CD4-positive, alpha-beta memory T cell (primary cell): ENCODE measurements at regions of chr10 and their contacts with region 1.

Region 1: GRCh38 chr10:70549962-70550458 is 52.5 kb downstream of the PRF1 start:
- DNase-seq: peak; percentile 59 to 69 (median 63)
- H3K4me3 ChIP-seq: no peak overlapping the region
- H3K4me3 Mint-ChIP-seq: no peak overlapping the region
- H3K27ac ChIP-seq: no peak overlapping the region
- H3K27ac Mint-ChIP-seq: no peak overlapping the region
- H3K4me1 ChIP-seq: no peaks in the 10 kb centered on the region
- H3K4me1 Mint-ChIP-seq: no peaks in the 10 kb centered on the region
- H3K27me3 ChIP-seq: no peaks in the 10 kb centered on the region
- H3K27me3 Mint-ChIP-seq: no peaks in the 10 kb centered on the region

Region 2: DNA sequence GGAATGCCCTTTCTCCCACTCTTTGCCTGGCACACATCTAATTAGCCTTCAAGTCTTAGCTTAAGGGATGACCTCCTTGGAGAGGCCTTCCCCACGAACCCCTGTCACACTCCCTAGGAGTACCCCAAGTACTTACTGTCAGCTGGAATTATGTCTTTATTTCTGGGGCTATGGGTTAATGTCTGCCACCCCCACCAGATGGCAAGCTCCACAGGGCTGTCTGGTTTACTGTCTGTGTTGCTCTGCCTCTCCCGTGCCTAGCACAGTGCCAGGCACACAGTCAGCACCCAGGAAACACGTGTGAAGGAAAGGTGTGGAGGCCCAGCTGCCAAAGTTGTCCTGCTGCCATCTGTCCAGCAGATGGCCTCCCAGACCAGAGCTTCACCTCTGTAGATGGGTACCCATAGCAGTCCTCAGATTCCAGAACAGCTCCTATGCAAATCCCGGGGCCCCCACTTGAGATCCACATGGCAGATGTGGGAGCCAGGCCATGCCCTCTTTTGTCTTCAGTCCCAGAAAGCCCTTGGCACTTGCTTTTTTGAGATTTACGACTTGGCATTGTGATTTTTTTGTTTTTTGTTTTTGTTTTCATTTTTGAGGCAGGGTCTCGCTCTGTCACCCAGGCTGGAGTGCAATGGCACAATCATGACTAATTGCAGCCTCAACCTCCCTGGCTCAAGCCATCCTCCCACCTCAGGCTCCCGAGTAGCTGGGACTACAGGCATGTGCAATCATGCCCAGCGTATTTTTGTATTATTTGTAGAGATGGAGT is 88.6 kb before region 1 on chr10:
- CTCF ChIA-PET with region 1: interaction called, 27 read pairs
- POLR2A ChIA-PET with region 1: no interaction called
- intact Hi-C with region 1: loop called (anchors 2 kb)
- DNase-seq: peak in 4 of 5 donors; percentile 31 to 40 (median 32)
- H3K4me3 ChIP-seq: no peak overlapping the region
- H3K4me3 Mint-ChIP-seq: no peak overlapping the region
- H3K27ac ChIP-seq: no peak overlapping the region
- H3K27ac Mint-ChIP-seq: peak overlapping the region in 2 of 7 donors; percentile 35 to 64
- H3K4me1 ChIP-seq: peaks cover 10% of the 10 kb centered on the region
- H3K4me1 Mint-ChIP-seq: peaks cover 0 to 16% (median 1%) of the 10 kb centered on the region in 4 donors
- H3K27me3 ChIP-seq: peaks cover 11% of the 10 kb centered on the region
- H3K27me3 Mint-ChIP-seq: peaks cover 25 to 32% of the 10 kb centered on the region in 2 donors

Region 3: GRCh38 chr10:70477661-70478162 is 72.3 kb before region 1 on chr10:
- CTCF ChIA-PET with region 1: no interaction called
- POLR2A ChIA-PET with region 1: no interaction called
- intact Hi-C with region 1: no loop called
- DNase-seq: peak; percentile 78 to 94 (median 80)
- H3K4me3 ChIP-seq: peak overlapping the region in 1 of 2 donors; percentile 33
- H3K4me3 Mint-ChIP-seq: peak overlapping the region; percentile 79 to 92 (median 80)
- H3K27ac ChIP-seq: no peak overlapping the region
- H3K27ac Mint-ChIP-seq: peak overlapping the region; percentile 68 to 95 (median 89)
- H3K4me1 ChIP-seq: peaks cover 50% of the 10 kb centered on the region
- H3K4me1 Mint-ChIP-seq: peaks cover 27 to 58% (median 45%) of the 10 kb centered on the region in 4 donors
- H3K27me3 ChIP-seq: no peaks in the 10 kb centered on the region
- H3K27me3 Mint-ChIP-seq: peaks cover 1 to 2% of the 10 kb centered on the region in 2 donors

Region 4: DNA sequence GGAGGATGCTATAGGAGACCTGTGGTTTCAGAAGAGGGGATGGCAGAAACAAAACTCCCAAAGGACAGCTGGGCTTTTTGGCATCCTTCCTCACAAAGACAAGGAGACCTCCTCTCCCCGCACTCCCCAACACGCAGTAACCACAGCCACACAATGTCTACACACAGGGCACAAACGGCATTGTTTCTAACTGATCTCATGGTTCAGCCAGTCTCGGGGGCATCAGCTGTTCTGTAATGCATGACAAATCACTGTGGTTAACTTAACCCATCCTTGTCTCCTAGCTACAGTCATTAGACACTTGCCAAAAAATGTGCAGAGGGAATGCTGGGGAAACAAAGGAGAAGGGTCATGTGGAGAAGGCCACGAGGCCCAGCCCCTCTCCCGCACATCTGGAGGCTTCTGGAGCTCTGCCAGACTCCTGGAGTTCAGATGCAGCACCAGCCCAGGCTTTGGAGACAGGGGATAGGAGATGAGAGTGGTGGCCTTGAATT is 114.7 kb after region 1 on chr10:
- CTCF ChIA-PET with region 1: no interaction called
- POLR2A ChIA-PET with region 1: no interaction called
- intact Hi-C with region 1: no loop called
- DNase-seq: no peak
- H3K4me3 ChIP-seq: no peak overlapping the region
- H3K4me3 Mint-ChIP-seq: no peak overlapping the region
- H3K27ac ChIP-seq: no peak overlapping the region
- H3K27ac Mint-ChIP-seq: no peak overlapping the region
- H3K4me1 ChIP-seq: no peaks in the 10 kb centered on the region
- H3K4me1 Mint-ChIP-seq: no peaks in the 10 kb centered on the region
- H3K27me3 ChIP-seq: peaks cover 5% of the 10 kb centered on the region
- H3K27me3 Mint-ChIP-seq: peaks cover 8 to 11% of the 10 kb centered on the region in 2 donors

Region 5: GRCh38 chr10:70693619-70694335 is 143.8 kb after region 1 on chr10:
- CTCF ChIA-PET with region 1: no interaction called
- POLR2A ChIA-PET with region 1: no interaction called
- intact Hi-C with region 1: loop called (anchors 10 kb)
- DNase-seq: peak in 1 of 5 donors; percentile 10
- H3K4me3 ChIP-seq: no peak overlapping the region
- H3K4me3 Mint-ChIP-seq: no peak overlapping the region
- H3K27ac ChIP-seq: no peak overlapping the region
- H3K27ac Mint-ChIP-seq: no peak overlapping the region
- H3K4me1 ChIP-seq: peaks cover 3% of the 10 kb centered on the region
- H3K4me1 Mint-ChIP-seq: peaks cover 0 to 2% (median 0%) of the 10 kb centered on the region in 4 donors
- H3K27me3 ChIP-seq: no peaks in the 10 kb centered on the region
- H3K27me3 Mint-ChIP-seq: no peaks in the 10 kb centered on the region

Region 6: GRCh38 chr10:70820976-70821755 is 271.2 kb after region 1 on chr10:
- CTCF ChIA-PET with region 1: interaction called, 3 read pairs
- POLR2A ChIA-PET with region 1: no interaction called
- intact Hi-C with region 1: loop called (anchors 1 kb)
- DNase-seq: no peak
- H3K4me3 ChIP-seq: no peak overlapping the region
- H3K4me3 Mint-ChIP-seq: no peak overlapping the region
- H3K27ac ChIP-seq: no peak overlapping the region
- H3K27ac Mint-ChIP-seq: peak overlapping the region in 1 of 7 donors; percentile 38
- H3K4me1 ChIP-seq: peaks cover 21% of the 10 kb centered on the region
- H3K4me1 Mint-ChIP-seq: peaks cover 22 to 53% (median 32%) of the 10 kb centered on the region in 4 donors
- H3K27me3 ChIP-seq: no peaks in the 10 kb centered on the region
- H3K27me3 Mint-ChIP-seq: no peaks in the 10 kb centered on the region

Region 7: DNA sequence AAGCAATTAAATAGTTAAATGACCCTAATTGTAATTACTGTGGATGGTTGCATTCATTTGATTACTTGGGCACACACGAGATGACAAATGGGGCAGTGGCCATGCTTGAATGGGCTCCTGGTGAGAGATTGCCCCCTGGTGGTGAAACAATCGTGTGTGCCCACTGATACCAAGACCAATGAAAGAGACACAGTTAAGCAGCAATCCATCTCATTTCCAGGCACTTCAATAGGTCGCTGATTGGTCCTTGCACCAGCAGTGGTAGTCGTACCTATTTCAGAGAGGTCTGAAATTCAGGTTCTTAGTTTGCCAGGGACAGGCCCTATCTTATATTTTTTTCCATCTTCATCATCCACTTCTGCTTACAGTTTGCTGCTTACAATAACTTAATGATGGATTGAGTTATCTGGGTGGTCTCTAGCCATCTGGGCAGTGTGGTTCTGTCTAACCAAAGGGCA is 330.1 kb after region 1 on chr10:
- CTCF ChIA-PET with region 1: interaction called, 8 read pairs
- POLR2A ChIA-PET with region 1: no interaction called
- intact Hi-C with region 1: loop called (anchors 1 kb)
- DNase-seq: peak; percentile 68 to 77 (median 73)
- H3K4me3 ChIP-seq: no peak overlapping the region
- H3K4me3 Mint-ChIP-seq: no peak overlapping the region
- H3K27ac ChIP-seq: no peak overlapping the region
- H3K27ac Mint-ChIP-seq: peak overlapping the region in 1 of 7 donors; percentile 36
- H3K4me1 ChIP-seq: no peaks in the 10 kb centered on the region
- H3K4me1 Mint-ChIP-seq: peaks cover 3 to 6% (median 4%) of the 10 kb centered on the region in 4 donors
- H3K27me3 ChIP-seq: no peaks in the 10 kb centered on the region
- H3K27me3 Mint-ChIP-seq: no peaks in the 10 kb centered on the region